H1 (cell line): ENCODE measurements at regions of chr17 and their contacts with region 1.

Region 1: GRCh38 chr17:72539981-72540897 is 419.4 kb downstream of the SOX9 start:
- DNase-seq: peak in 1 of 2 experiments; percentile 98
- H3K4me3 ChIP-seq: peak overlapping the region in 1 of 4 experiments; percentile 44; a peak in 2 of 8 replicates
- H3K27ac ChIP-seq: no peak overlapping the region
- H3K4me1 ChIP-seq: peaks cover 7 to 16% (median 10%) of the 10 kb centered on the region in 4 experiments
- H3K27me3 ChIP-seq: no peaks in the 10 kb centered on the region
- CTCF ChIP-seq: peak; percentile 84 to 90 (median 87)
- EP300 ChIP-seq: peak in 1 of 2 experiments; percentile 25; a peak in 1 of 3 replicates
- POLR2A ChIP-seq: no peak
- RAD21 ChIP-seq: peak; percentile 91

Region 2: GRCh38 chr17:72479113-72479512 is 61.1 kb before region 1 on chr17:
- CTCF ChIA-PET with region 1: interaction called, 10 read pairs
- POLR2A ChIA-PET with region 1: interaction called, 3 read pairs
- DNase-seq: no peak
- H3K4me3 ChIP-seq: no peak overlapping the region
- H3K27ac ChIP-seq: no peak overlapping the region
- H3K4me1 ChIP-seq: peaks cover 13 to 31% (median 26%) of the 10 kb centered on the region in 4 experiments; a peak in 6 of 7 replicates
- H3K27me3 ChIP-seq: no peaks in the 10 kb centered on the region
- CTCF ChIP-seq: peak; percentile 41 to 60 (median 55); a peak in 3 of 4 replicates
- EP300 ChIP-seq: no peak
- POLR2A ChIP-seq: no peak
- RAD21 ChIP-seq: peak; percentile 45 to 59

Region 3: DNA sequence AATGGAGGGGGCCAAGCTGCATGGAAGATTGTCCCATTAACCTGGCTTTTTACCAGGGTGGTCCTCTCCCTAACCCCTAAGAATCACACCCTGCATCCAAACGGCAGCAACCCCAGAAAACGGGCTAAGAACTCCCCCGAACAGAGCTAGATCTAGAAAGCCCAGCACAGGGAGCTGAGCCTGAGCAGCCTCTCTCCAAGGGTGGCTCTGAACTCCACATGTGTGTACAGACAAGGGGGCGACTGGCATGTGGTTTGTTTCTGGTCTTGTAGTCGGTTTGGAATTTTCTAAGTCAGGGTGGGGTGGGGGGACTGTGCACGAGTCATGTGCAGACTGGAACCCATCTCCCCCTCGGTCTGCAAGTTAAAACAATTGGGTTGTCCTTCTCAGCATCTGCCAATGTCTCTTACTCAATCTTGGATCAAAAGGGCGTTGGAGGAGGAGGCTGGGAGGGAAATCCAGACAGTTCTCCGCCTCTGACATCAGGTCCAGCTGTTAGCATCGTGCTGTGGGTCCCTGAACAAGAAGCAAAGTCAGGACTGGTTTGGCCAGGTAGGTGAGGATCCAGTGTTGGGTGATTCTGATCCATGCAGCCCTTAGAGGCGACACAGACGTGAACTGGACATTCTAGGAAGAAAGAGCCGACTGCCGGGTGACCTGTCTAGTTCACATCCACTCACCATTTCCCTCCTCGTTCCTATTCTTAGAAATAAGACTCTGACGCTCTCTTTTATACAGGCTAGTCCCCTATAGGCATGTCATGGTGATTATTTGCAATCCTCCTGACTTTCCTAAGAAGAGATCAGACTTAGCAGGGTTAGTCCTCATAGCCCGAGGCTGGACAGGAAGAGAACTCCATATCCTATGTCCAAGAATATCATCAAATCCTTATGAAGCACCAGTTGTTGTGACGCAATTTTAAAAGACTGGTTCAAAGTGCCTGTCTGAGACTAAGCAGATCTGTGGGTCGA is 37.6 kb before region 1 on chr17:
- CTCF ChIA-PET with region 1: interaction called, 10 read pairs
- POLR2A ChIA-PET with region 1: no interaction called
- DNase-seq: no peak
- H3K4me3 ChIP-seq: no peak overlapping the region
- H3K27ac ChIP-seq: no peak overlapping the region
- H3K4me1 ChIP-seq: peaks cover 0 to 14% (median 8%) of the 10 kb centered on the region in 4 experiments
- H3K27me3 ChIP-seq: no peaks in the 10 kb centered on the region
- CTCF ChIP-seq: no peak
- EP300 ChIP-seq: no peak
- POLR2A ChIP-seq: no peak
- RAD21 ChIP-seq: no peak

Region 4: DNA sequence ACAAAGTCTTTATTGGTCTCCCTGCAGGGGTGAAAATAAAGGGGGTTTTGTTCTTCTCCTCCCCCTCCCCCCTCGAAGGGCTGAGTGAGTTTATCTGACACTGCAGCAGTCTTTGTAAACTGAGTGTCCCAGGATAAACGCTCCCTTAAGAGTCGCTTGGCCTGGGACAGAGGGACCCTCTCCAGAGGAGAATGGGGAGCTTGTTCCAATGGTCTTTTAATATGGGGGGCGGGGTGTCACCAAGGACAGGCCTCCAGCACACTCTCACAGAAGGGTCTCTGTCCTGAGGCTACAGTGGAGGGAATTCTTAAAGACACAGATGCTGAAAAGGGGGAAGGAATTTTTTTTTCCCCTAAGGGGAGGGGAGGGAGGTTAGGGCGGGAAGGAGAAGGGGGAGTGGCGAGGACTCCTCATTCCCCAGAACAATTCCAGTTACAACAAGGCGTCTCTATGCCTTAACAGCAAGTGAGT is 36.1 kb after region 1 on chr17:
- CTCF ChIA-PET with region 1: no interaction called
- POLR2A ChIA-PET with region 1: no interaction called
- DNase-seq: no peak
- H3K4me3 ChIP-seq: peak overlapping the region in 3 of 4 experiments; percentile 6 to 39 (median 19); a peak in 5 of 8 replicates
- H3K27ac ChIP-seq: no peak overlapping the region
- H3K4me1 ChIP-seq: peaks cover 0 to 13% (median 10%) of the 10 kb centered on the region in 4 experiments; a peak in 5 of 7 replicates
- H3K27me3 ChIP-seq: no peaks in the 10 kb centered on the region
- CTCF ChIP-seq: no peak
- EP300 ChIP-seq: no peak
- POLR2A ChIP-seq: no peak
- RAD21 ChIP-seq: no peak